ENCODE measurements at regions of chr17 and their contacts with region 1.

Region 1: GRCh38 chr17:37413875-37414519 is 7.3 kb downstream of the TADA2A start:
- DNase-seq: no peak
- ATAC-seq: no peak
- H3K4me3 ChIP-seq: no peak overlapping the region
- H3K27ac ChIP-seq: no peak overlapping the region
- H3K4me1 ChIP-seq: no peaks in the 10 kb centered on the region
- H3K27me3 ChIP-seq: no peaks in the 10 kb centered on the region
- CTCF ChIP-seq: peak in 2 of 4 donors; percentile 4 to 9
- POLR2A ChIP-seq: no peak

Region 2: GRCh38 chr17:37489197-37490001 is 75.4 kb after region 1 on chr17 and contains the start of gene DUSP14:
- intact Hi-C with region 1: loop called in 1 of 2 experiments (anchors 10 kb)
- DNase-seq: peak; percentile 85 to 87 (median 86)
- ATAC-seq: peak; percentile 67 to 90 (median 85)
- H3K4me3 ChIP-seq: peak within 1 kb of the TSS; percentile 72 to 88 (median 83)
- H3K27ac ChIP-seq: peak within 1 kb of the TSS; percentile 82 to 90 (median 88)
- H3K4me1 ChIP-seq: peaks cover 0 to 36% (median 10%) of the 10 kb centered on the region in 4 donors
- H3K27me3 ChIP-seq: no peaks in the 10 kb centered on the region
- CTCF ChIP-seq: no peak
- POLR2A ChIP-seq: peak; percentile 46
- total RNA-seq, gene DUSP14: 10.6 to 21.2 (median 13.2) TPM

Measured in right lobe of liver (tissue), 6 donors.